Activated CD8-positive, alpha-beta memory T cell treated with anti-CD3 and anti-CD28 coated beads, Interleukin-2, amount 10 ng/mL, durations not matched to agents 7 days and 5 days (primary cell): ENCODE measurements at regions of chr20 and their contacts with region 1.

Region 1: DNA sequence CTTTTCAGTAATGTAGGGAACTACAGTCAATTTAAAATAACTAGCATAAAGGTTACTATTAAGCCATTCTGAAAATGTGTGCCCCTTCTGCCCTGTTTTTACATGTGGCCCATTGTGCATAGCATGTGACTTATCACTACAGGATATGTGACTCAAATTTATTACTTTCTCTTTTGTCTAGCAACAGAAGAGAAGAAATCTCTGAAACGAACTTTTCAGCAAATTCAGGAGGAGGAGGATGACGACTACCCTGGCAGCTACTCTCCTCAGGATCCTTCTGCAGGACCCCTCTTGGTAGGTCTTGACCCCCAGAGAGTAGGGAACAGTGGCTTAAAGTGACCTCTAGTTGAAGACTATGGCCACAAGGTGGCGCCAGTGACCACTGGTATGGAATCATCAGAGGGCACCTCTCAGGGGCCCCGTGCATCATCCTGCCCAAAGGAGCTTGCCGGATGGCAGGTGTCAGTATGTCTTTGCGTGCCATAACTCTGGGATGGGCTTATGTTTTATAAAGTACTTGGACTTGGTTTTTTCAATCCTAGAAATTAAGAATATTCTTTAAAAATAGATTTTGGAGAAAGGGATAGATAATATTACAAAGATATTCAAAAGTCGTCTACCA is 23.9 kb downstream of the RPRD1B start:
- DNase-seq: peak; percentile 82
- ATAC-seq: peak; percentile 88
- H3K4me3 Mint-ChIP-seq: no peak overlapping the region
- H3K27ac Mint-ChIP-seq: peak overlapping the region; percentile 44
- H3K4me1 Mint-ChIP-seq: peaks cover 24% of the 10 kb centered on the region
- H3K27me3 Mint-ChIP-seq: no peaks in the 10 kb centered on the region

Region 2: GRCh38 chr20:38040281-38040680 is 17.2 kb before region 1 on chr20:
- CTCF ChIA-PET with region 1: interaction called, 11 read pairs
- DNase-seq: no peak
- ATAC-seq: no peak
- H3K4me3 Mint-ChIP-seq: no peak overlapping the region
- H3K27ac Mint-ChIP-seq: no peak overlapping the region
- H3K4me1 Mint-ChIP-seq: peaks cover 25% of the 10 kb centered on the region
- H3K27me3 Mint-ChIP-seq: no peaks in the 10 kb centered on the region

Region 3: DNA sequence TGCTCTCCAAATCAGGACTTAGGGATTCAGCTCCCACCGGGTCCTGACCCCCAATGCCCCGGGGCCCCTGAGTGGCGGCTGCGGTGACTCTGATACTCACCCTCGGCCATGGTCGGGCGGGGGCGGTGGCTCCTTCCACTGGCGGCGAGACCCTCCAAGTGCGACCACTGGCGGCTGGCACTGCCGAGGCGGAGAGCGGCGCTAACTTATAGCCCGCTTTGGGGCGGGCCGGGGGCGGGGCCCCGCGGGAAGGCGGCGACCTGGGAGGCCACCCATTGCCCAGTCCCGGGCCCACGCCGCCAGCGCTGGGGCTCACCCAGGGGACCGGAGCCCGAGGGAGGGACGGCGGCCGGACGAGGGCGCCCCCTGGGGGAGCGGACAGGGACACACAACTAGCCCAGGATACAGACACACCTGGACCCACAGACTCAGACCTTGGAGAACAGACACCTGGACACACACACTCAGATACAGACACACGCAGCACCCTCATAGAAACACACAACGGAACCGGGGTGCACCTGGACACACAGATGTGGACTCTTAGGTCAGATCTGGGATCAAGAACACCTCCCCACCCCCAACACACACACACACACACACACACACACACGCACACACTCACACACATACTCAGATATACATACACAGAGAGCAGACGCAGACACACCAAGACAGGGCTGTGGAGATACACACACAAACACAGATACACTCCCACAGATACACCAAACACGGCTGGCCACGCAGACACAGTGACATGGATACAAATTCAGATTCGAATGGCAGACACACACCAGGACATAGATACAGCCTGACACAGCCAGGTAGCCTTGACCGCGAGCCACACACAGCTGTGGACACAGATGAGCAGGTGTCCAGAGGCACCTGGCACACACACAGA is 107.9 kb after region 1 on chr20 and contains the start of gene TGM2:
- CTCF ChIA-PET with region 1: interaction called, 27 read pairs
- DNase-seq: peak; percentile 64
- ATAC-seq: peak; percentile 90
- H3K4me3 Mint-ChIP-seq: peak within 1 kb of the TSS; percentile 7
- H3K27ac Mint-ChIP-seq: no peak within 1 kb of the TSS
- H3K4me1 Mint-ChIP-seq: peaks cover 32% of the 10 kb centered on the region
- H3K27me3 Mint-ChIP-seq: peaks cover 24% of the 10 kb centered on the region
- total RNA-seq, gene TGM2: 0.35 TPM

Region 4: GRCh38 chr20:38842558-38842981 is 785.1 kb after region 1 on chr20:
- CTCF ChIA-PET with region 1: no interaction called
- DNase-seq: peak; percentile 62
- ATAC-seq: no peak
- H3K4me3 Mint-ChIP-seq: peak overlapping the region; percentile 32
- H3K27ac Mint-ChIP-seq: peak overlapping the region; percentile 77
- H3K4me1 Mint-ChIP-seq: peaks cover 85% of the 10 kb centered on the region
- H3K27me3 Mint-ChIP-seq: no peaks in the 10 kb centered on the region